ENCODE measurements at regions of chr22 and their contacts with region 1.

Region 1: GRCh38 chr22:36465165-36466021 is 16.0 kb downstream of the TXN2 start:
- DNase-seq: peak; percentile 87
- ATAC-seq: peak; percentile 68
- H3K4me3 ChIP-seq: no peak overlapping the region
- H3K27ac ChIP-seq: peak overlapping the region; percentile 75
- H3K4me1 ChIP-seq: peaks cover 58% of the 10 kb centered on the region
- H3K27me3 ChIP-seq: no peaks in the 10 kb centered on the region
- CTCF ChIP-seq: no peak

Region 2: DNA sequence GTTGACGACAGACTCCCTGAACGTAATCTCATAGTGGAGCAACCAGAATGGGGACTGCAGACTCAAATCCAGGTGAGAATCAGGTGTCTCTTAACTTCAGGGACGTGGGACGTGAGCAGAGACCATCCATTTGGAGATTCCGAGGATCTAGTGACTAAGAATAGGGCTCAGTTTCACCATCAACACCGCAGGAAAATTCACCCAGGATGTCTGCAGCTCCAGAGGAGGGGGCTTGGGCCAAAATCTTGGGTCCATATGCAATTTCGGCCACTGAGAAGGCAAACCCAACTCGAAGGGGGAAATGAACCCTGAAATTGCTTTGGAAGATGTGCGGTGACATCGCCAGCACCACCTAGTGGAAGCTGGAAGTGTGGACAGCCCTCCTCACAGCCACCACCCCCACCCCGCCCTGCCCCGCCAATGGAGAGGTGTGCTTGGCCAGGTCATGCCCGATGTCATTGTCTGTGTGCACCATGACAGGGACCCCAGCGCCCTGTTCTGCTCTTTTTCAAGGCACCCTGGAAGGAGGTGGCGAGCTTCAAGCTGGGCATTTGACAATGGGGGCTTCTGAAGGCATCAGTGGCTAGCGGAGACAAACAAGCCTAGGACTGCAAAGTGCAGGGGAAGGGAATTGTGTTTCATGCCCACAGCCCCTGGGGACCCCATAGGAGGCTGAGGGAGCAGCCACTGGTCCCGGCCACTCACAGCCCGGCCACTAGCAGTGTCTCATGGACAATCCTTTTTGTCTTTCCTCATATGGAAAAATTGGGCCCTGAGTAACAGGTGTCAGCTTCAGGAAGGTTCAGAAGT is 187.7 kb before region 1 on chr22:
- intact Hi-C with region 1: no loop called
- DNase-seq: peak; percentile 77
- ATAC-seq: peak; percentile 87
- H3K4me3 ChIP-seq: no peak overlapping the region
- H3K27ac ChIP-seq: no peak overlapping the region
- H3K4me1 ChIP-seq: peaks cover 8% of the 10 kb centered on the region
- H3K27me3 ChIP-seq: no peaks in the 10 kb centered on the region
- CTCF ChIP-seq: peak; percentile 82

Region 3: GRCh38 chr22:36301384-36301828 is 164.0 kb before region 1 on chr22:
- intact Hi-C with region 1: loop called (anchors 5 kb)
- DNase-seq: peak; percentile 85
- ATAC-seq: peak; percentile 78
- H3K4me3 ChIP-seq: no peak overlapping the region
- H3K27ac ChIP-seq: no peak overlapping the region
- H3K4me1 ChIP-seq: no peaks in the 10 kb centered on the region
- H3K27me3 ChIP-seq: no peaks in the 10 kb centered on the region
- CTCF ChIP-seq: peak; percentile 95

Region 4: GRCh38 chr22:36387752-36388518 is 77.5 kb before region 1 on chr22 and contains the start of gene MYH9:
- intact Hi-C with region 1: loop called (anchors 5 kb)
- DNase-seq: peak; percentile 100
- ATAC-seq: peak; percentile 94
- H3K4me3 ChIP-seq: peak within 1 kb of the TSS; percentile 96
- H3K27ac ChIP-seq: peak within 1 kb of the TSS; percentile 96
- H3K4me1 ChIP-seq: peaks cover 36% of the 10 kb centered on the region
- H3K27me3 ChIP-seq: no peaks in the 10 kb centered on the region
- CTCF ChIP-seq: no peak
- total RNA-seq, gene MYH9: 842 TPM